H1 (cell line): ENCODE measurements at regions of chr2 and their contacts with region 1.

Region 1: DNA sequence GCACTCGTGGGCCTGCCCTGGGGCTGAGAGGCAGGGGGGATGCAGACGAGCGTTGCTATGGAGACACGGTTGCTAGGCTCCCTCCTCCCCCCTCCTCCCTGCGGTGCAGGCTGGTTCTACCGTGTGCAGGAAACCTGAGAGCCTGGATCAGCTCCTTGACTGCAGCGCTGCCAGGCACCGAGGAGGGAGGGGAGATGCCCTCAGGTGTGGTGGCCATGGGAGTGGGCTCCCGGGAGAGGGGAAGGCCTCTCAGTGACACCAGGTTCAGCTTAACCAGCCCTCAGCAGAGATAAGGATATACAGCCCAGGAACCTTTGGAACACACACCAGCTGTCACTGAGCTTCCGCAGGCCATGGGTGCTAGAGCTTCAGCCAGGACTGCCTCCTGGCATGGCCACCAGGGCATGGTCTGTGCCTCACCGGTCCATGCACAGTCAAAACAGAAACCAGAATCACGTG is 124.4 kb upstream of the PXDN start:
- DNase-seq: no peak
- H3K4me3 ChIP-seq: no peak overlapping the region
- H3K27ac ChIP-seq: no peak overlapping the region
- H3K4me1 ChIP-seq: peaks cover 0 to 29% (median 19%) of the 10 kb centered on the region in 4 experiments; a peak in 6 of 7 replicates
- H3K27me3 ChIP-seq: peaks cover 0 to 10% (median 7%) of the 10 kb centered on the region in 4 experiments; a peak in 4 of 7 replicates
- CTCF ChIP-seq: no peak
- EP300 ChIP-seq: no peak
- POLR2A ChIP-seq: no peak
- RAD21 ChIP-seq: no peak

Region 2: DNA sequence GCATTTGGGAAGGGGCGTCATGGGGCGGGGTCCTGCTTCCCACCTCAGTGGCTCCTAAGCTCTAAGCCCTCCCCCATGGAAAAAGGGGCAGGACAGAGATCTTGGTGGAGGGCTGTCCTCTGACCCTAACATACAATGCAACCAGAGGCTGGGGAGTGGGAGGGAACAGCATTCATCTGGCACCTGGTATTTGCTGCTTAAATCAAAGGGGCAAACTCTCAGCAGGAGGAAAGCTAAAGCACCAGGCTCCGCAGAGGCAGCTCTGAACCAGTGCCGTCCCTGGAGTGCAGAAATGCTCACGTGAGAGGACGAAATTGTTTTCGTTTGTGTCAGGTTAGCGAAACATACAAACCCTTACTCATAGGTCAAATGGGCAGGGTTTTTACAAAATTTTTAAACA is 31.7 kb before region 1 on chr2:
- CTCF ChIA-PET with region 1: no interaction called
- POLR2A ChIA-PET with region 1: no interaction called
- DNase-seq: no peak
- H3K4me3 ChIP-seq: no peak overlapping the region
- H3K27ac ChIP-seq: no peak overlapping the region
- H3K4me1 ChIP-seq: peaks cover 0 to 10% (median 2%) of the 10 kb centered on the region in 4 experiments; a peak in 4 of 7 replicates
- H3K27me3 ChIP-seq: peaks cover 0 to 3% (median 0%) of the 10 kb centered on the region in 4 experiments; a peak in 2 of 7 replicates
- CTCF ChIP-seq: no peak
- EP300 ChIP-seq: no peak
- POLR2A ChIP-seq: no peak
- RAD21 ChIP-seq: no peak

Region 3: DNA sequence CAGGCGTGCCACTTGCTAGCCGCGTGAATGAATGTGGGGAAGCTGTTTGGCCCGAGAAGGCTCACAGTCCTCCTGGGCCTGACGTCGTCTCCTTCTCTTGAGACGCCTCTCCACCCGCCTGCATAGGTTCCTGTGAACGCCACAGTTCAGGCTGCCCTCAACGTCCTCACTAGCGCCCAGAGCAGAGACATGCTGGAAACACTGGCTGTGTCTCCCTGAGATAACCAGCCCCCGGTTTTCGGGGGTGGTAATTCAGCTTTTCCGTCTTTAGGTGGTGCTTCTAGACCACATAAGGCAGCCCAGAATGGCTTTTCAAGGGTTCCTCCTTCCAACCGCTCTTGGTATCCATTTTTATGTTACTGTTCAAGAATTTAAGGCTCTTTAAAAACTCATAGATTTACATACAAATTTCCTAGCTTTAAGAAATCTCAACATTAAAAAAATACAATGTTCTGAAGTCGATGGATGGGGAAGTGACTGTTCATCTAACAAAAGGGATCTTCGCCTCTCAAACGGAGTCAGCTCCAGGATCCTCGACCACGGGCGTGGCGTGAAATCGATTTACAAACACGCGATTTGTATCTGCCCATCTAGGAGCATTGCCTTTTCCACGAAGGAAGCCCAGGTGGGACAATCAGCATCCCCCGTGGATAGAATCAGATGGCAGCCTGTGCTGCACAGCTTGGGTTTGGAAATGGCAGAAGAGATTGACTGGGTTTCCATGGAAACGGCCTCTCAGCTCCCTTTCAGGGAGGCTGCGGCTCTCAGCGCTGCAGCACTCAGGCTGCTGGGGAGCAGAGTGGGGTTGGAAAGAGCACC is 13.8 kb before region 1 on chr2:
- CTCF ChIA-PET with region 1: interaction called, 33 read pairs
- POLR2A ChIA-PET with region 1: interaction called, 4 read pairs
- DNase-seq: peak; percentile 34 to 75
- H3K4me3 ChIP-seq: peak overlapping the region; percentile 26 to 57 (median 36); a peak in 5 of 8 replicates
- H3K27ac ChIP-seq: no peak overlapping the region
- H3K4me1 ChIP-seq: peaks cover 0 to 2% (median under 1%) of the 10 kb centered on the region in 4 experiments; a peak in 1 of 7 replicates
- H3K27me3 ChIP-seq: no peaks in the 10 kb centered on the region; a peak in 1 of 7 replicates
- CTCF ChIP-seq: peak; percentile 44 to 76 (median 65)
- EP300 ChIP-seq: no peak
- POLR2A ChIP-seq: no peak
- RAD21 ChIP-seq: peak; percentile 93

Region 4: GRCh38 chr2:1900736-1901135 is 32.0 kb after region 1 on chr2:
- CTCF ChIA-PET with region 1: interaction called, 10 read pairs
- POLR2A ChIA-PET with region 1: interaction called, 3 read pairs
- DNase-seq: peak; percentile 59 to 72
- H3K4me3 ChIP-seq: no peak overlapping the region
- H3K27ac ChIP-seq: no peak overlapping the region
- H3K4me1 ChIP-seq: no peaks in the 10 kb centered on the region
- H3K27me3 ChIP-seq: no peaks in the 10 kb centered on the region
- CTCF ChIP-seq: peak; percentile 96 to 99 (median 97)
- EP300 ChIP-seq: no peak
- POLR2A ChIP-seq: no peak
- RAD21 ChIP-seq: peak; percentile 80 to 83